Dorsolateral prefrontal cortex (tissue), 120 donors: ENCODE measurements at regions of chr5 and their contacts with region 1.

Region 1: GRCh38 chr5:88555674-88556073 is 287.0 kb upstream of the TMEM161B start:
- DNase-seq: peak in 3 of 10 donors; percentile 33 to 77 (median 48)
- H3K4me3 ChIP-seq: peak overlapping the region in 16 of 59 donors; percentile 0 to 36 (median 15)
- H3K27ac ChIP-seq: peak overlapping the region in 5 of 59 donors; percentile 12 to 84 (median 31)
- H3K27me3 ChIP-seq: no peaks in the 10 kb centered on the region
- CTCF ChIP-seq: no peak

Region 2: GRCh38 chr5:88419931-88420330 is 135.7 kb before region 1 on chr5:
- intact Hi-C with region 1: no loop called
- DNase-seq: no peak
- H3K4me3 ChIP-seq: no peak overlapping the region
- H3K27ac ChIP-seq: no peak overlapping the region
- H3K27me3 ChIP-seq: no peaks in the 10 kb centered on the region
- CTCF ChIP-seq: no peak

Region 3: DNA sequence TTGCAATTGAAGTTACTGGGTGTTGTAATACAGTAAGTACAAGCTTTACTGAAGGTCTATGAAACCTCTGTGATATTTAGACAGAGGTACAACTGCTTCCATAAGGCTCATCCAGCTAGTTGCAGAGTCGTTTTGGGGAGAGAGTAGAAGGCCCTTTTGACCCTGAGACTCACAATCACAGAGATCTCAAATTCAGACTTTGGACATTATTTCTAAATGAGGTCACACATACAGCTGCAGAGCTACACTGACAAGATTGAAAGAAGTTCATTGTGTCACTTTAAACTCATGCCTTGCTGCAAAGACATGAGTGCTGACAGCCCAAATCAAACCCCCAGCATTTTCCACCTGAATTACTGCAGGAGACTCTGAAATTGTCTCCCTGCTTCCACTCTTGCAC is 81.1 kb before region 1 on chr5:
- intact Hi-C with region 1: loop called in 1 of 2 experiments (anchors 10 kb)
- DNase-seq: no peak
- H3K4me3 ChIP-seq: peak overlapping the region in 1 of 59 donors; percentile 8
- H3K27ac ChIP-seq: peak overlapping the region in 56 of 59 donors; percentile 3 to 90 (median 74)
- H3K27me3 ChIP-seq: no peaks in the 10 kb centered on the region
- CTCF ChIP-seq: no peak

Region 4: DNA sequence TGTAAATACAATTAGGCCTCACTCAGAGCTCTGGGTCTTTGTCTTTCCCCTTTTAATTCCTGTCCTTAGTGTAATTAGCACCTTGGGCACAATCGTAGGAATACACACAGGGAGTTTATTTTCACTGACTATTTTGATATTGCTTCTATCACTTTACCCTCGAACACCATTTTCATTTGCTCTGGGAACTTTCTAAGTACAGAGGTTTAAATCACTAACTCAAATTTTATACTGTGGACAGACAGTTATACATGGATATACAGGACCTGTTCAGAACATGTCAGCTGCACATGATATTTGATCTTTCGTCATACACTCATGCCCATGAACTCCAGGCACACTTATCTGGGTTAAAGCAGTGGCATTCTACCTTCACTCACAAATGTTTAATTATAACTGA is 69.2 kb before region 1 on chr5:
- intact Hi-C with region 1: no loop called
- DNase-seq: no peak
- H3K4me3 ChIP-seq: no peak overlapping the region
- H3K27ac ChIP-seq: peak overlapping the region in 31 of 59 donors; percentile 0 to 79 (median 32)
- H3K27me3 ChIP-seq: no peaks in the 10 kb centered on the region
- CTCF ChIP-seq: no peak

Region 5: GRCh38 chr5:88502179-88503040 is 53.3 kb before region 1 on chr5:
- intact Hi-C with region 1: loop called in 1 of 2 experiments (anchors 10 kb)
- DNase-seq: no peak
- H3K4me3 ChIP-seq: peak overlapping the region; percentile 36 to 76 (median 59)
- H3K27ac ChIP-seq: peak overlapping the region in 55 of 59 donors; percentile 10 to 89 (median 69)
- H3K27me3 ChIP-seq: no peaks in the 10 kb centered on the region
- CTCF ChIP-seq: no peak

Region 6: GRCh38 chr5:88660947-88661805 is 105.5 kb after region 1 on chr5:
- intact Hi-C with region 1: loop called in 1 of 2 experiments (anchors 5 kb)
- DNase-seq: peak; percentile 96 to 99 (median 98)
- H3K4me3 ChIP-seq: peak overlapping the region; percentile 45 to 93 (median 64)
- H3K27ac ChIP-seq: peak overlapping the region; percentile 43 to 100 (median 98)
- H3K27me3 ChIP-seq: peaks cover 0 to 21% (median 0%) of the 10 kb centered on the region in 45 donors
- CTCF ChIP-seq: peak in 34 of 56 donors; percentile 6 to 53 (median 26)

Region 7: GRCh38 chr5:89313804-89314588 is 758.3 kb after region 1 on chr5:
- intact Hi-C with region 1: no loop called
- DNase-seq: no peak
- H3K4me3 ChIP-seq: no peak overlapping the region
- H3K27ac ChIP-seq: no peak overlapping the region
- H3K27me3 ChIP-seq: no peaks in the 10 kb centered on the region
- CTCF ChIP-seq: no peak